T-cell (primary cell): ENCODE measurements at regions of chr4 and their contacts with region 1.

Region 1: GRCh38 chr4:77911842-77912450 is 49.3 kb downstream of the MRPL1 start:
- DNase-seq: no peak
- ATAC-seq: no peak
- H3K4me3 ChIP-seq: no peak overlapping the region
- H3K4me3 Mint-ChIP-seq: no peak overlapping the region
- H3K27ac ChIP-seq: no peak overlapping the region
- H3K27ac Mint-ChIP-seq: no peak overlapping the region
- H3K4me1 ChIP-seq: no peaks in the 10 kb centered on the region
- H3K4me1 Mint-ChIP-seq: peaks cover 4 to 13% (median 8%) of the 10 kb centered on the region in 3 donors
- H3K27me3 ChIP-seq: no peaks in the 10 kb centered on the region
- H3K27me3 Mint-ChIP-seq: no peaks in the 10 kb centered on the region

Region 2: DNA sequence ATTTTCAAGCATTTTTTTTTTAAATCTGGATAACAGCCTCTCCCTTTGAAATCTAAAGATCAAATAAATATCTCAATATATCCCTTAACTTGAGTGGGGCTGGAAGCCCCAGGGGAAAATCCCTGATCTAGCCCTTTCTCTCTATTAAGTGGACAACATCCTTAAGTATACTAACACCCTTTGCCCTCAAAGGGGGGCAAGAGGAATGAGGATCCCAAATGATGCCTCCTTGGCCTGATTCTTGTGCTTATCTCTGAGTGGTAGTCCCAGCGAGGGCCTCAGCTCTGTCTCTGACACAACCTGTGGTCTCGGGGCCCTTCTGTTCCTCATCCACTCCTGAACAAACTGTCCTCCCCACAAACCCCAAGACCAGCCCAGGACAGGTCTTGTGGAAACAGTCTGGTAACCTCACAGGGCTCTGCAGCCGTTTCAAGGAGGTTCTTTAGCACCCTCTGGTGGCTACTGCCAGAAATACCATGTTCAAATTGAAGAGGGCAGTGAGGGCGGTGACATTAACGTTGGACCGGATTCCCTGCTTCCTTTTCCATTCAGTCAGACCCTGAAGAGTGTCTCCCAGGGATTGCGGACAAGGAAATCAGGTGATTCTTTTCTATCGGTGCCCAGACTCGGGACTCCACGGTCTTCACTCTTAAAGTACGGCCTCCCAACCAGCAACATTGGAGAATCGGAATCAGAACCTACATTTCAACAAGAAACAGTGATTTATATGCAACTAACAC is 293.4 kb before region 1 on chr4:
- CTCF ChIA-PET with region 1: no interaction called
- POLR2A ChIA-PET with region 1: interaction called in 1 of 2 experiments, 11 read pairs
- DNase-seq: peak in 34 of 35 experiments; percentile 2 to 73 (median 34)
- ATAC-seq: peak; percentile 59 to 75 (median 64)
- H3K4me3 ChIP-seq: no peak overlapping the region
- H3K4me3 Mint-ChIP-seq: no peak overlapping the region
- H3K27ac ChIP-seq: no peak overlapping the region
- H3K27ac Mint-ChIP-seq: no peak overlapping the region
- H3K4me1 ChIP-seq: peaks cover 0 to 6% of the 10 kb centered on the region in 2 experiments
- H3K4me1 Mint-ChIP-seq: peaks cover 4 to 11% (median 6%) of the 10 kb centered on the region in 3 donors
- H3K27me3 ChIP-seq: peaks cover 0 to 4% of the 10 kb centered on the region in 2 experiments
- H3K27me3 Mint-ChIP-seq: peaks cover 9 to 15% of the 10 kb centered on the region in 2 donors